H1 (cell line): ENCODE measurements at regions of chr7 and their contacts with region 1.

Region 1: GRCh38 chr7:5423844-5424688 is 432 bp upstream of the TNRC18 start:
- DNase-seq: peak; percentile 82 to 90
- H3K4me3 ChIP-seq: peak overlapping the region; percentile 57 to 78 (median 68)
- H3K27ac ChIP-seq: no peak overlapping the region
- H3K4me1 ChIP-seq: peaks cover 0 to 47% (median 17%) of the 10 kb centered on the region in 4 experiments; a peak in 5 of 7 replicates
- H3K27me3 ChIP-seq: peaks cover 33 to 77% (median 66%) of the 10 kb centered on the region in 4 experiments; a peak in 6 of 7 replicates
- CTCF ChIP-seq: no peak
- EP300 ChIP-seq: peak in 1 of 2 experiments; percentile 50; a peak in 1 of 3 replicates
- POLR2A ChIP-seq: no peak; a peak in 1 of 3 replicates
- RAD21 ChIP-seq: no peak

Region 2: DNA sequence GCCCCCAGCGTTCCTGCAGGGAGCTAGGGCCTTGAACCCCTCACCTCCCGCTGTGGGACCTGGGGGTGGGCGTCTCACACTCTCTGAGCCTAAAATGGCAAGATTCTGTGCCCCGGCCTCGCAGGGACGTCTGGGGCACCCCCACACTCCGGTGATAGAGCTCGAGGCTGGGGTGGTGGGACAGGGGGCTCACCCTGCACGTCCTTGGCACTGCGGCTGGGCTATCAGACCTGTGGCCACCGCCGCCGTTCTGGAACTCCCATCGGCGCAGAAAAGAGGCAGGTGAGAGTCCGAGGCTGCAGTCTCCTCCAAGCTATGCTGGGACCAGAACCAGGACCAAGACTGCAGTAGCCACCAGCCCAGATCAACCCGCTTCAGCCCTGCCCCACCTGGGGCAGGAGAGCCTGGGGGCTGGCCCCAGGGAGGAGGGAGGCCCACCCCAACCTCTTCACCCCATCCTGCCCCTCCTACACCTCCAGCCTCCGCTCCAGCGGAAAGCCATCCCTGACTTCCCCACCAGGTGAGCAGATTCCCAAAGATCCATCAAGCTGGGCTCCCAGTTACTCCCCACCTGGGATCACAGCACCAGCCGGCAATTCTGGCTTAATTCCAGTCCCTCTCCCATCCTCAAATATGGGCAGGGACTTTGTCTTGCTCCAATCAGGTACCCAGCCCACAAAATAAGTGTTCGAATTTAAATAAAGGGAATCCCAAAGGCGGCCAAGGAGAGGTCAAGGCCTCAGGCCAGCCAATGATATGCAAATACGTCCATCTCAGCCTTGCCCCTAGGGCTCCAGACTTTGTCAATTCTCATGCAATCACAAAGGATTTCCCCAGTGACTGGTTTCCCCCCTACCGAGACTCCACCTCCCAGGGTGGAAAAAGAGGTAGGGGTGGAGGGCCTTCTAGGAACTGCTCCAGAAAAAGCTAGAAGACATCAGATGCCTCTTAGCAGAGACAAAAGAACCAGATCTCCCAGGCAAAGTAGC is 16.8 kb before region 1 on chr7:
- CTCF ChIA-PET with region 1: interaction called, 16 read pairs
- POLR2A ChIA-PET with region 1: interaction called, 28 read pairs
- DNase-seq: peak; percentile 79 to 89
- H3K4me3 ChIP-seq: peak overlapping the region in 3 of 4 experiments; percentile 4 to 35 (median 15); a peak in 4 of 8 replicates
- H3K27ac ChIP-seq: no peak overlapping the region
- H3K4me1 ChIP-seq: peaks cover 5 to 14% (median 13%) of the 10 kb centered on the region in 4 experiments
- H3K27me3 ChIP-seq: peaks cover 5 to 27% (median 19%) of the 10 kb centered on the region in 4 experiments
- CTCF ChIP-seq: peak in 2 of 3 experiments; percentile 19 to 20; a peak in 2 of 4 replicates
- EP300 ChIP-seq: peak in 1 of 2 experiments; percentile 31; a peak in 1 of 3 replicates
- POLR2A ChIP-seq: no peak
- RAD21 ChIP-seq: no peak; a peak in 1 of 4 replicates